ENCODE measurements at regions of chr17 and their contacts with region 1.

Region 1: DNA sequence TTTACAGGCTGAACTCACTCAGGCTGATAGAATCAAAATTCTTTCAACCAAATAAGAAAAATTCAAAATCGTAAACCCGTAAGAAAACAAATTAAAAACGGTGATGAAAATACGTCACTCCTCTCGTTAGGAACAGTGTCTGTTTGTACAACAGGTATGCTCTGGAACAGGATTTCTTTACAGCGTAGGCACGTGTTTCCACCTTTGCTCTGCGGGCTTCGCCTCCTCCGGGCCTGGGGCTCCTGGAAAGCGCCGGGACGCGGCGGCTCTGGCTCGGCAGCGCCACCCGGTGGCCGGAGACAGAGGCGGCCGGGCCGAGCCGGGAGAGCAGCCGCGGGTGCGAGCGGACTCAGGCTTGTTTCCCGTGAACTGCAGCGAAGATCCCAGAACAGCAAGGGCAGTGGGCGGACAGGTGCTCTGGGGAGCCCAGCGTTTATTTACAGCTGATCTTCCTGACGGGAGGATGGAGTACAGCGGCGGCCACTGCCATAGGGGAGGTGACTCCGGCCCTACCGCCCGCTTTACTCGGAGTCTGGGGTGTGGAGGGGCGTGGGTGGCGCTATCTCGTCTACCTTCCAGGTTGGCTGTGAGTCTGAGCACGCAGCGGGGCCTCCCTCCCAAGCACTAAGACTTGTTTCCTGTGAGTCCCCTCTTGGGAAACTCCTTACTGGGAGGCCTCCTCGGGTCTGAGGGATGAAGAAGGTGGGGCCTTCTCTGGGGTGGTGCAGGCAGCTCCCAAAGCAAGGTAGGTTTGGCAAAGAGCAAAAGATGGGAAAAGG is 40.5 kb upstream of the ATP2A3 start:
- DNase-seq: peak; percentile 6
- ATAC-seq: peak; percentile 93
- H3K4me3 ChIP-seq: no peak overlapping the region
- H3K27ac ChIP-seq: no peak overlapping the region
- H3K4me1 ChIP-seq: peaks cover 0 to 11% of the 10 kb centered on the region in 2 experiments; a peak in 2 of 4 replicates
- H3K27me3 ChIP-seq: no peaks in the 10 kb centered on the region
- CTCF ChIP-seq: peak; percentile 89 to 94 (median 93)
- POLR2A ChIP-seq: no peak
- RAD21 ChIP-seq: peak; percentile 93

Region 2: GRCh38 chr17:3859940-3860339 is 144.8 kb before region 1 on chr17:
- CTCF ChIA-PET with region 1: no interaction called
- POLR2A ChIA-PET with region 1: no interaction called
- RAD21 ChIA-PET with region 1: no interaction called
- intact Hi-C with region 1: loop called (anchors 2 kb)
- DNase-seq: no peak
- ATAC-seq: no peak
- H3K4me3 ChIP-seq: no peak overlapping the region
- H3K27ac ChIP-seq: no peak overlapping the region
- H3K4me1 ChIP-seq: no peaks in the 10 kb centered on the region
- H3K27me3 ChIP-seq: no peaks in the 10 kb centered on the region
- CTCF ChIP-seq: no peak
- POLR2A ChIP-seq: no peak
- RAD21 ChIP-seq: no peak

Region 3: DNA sequence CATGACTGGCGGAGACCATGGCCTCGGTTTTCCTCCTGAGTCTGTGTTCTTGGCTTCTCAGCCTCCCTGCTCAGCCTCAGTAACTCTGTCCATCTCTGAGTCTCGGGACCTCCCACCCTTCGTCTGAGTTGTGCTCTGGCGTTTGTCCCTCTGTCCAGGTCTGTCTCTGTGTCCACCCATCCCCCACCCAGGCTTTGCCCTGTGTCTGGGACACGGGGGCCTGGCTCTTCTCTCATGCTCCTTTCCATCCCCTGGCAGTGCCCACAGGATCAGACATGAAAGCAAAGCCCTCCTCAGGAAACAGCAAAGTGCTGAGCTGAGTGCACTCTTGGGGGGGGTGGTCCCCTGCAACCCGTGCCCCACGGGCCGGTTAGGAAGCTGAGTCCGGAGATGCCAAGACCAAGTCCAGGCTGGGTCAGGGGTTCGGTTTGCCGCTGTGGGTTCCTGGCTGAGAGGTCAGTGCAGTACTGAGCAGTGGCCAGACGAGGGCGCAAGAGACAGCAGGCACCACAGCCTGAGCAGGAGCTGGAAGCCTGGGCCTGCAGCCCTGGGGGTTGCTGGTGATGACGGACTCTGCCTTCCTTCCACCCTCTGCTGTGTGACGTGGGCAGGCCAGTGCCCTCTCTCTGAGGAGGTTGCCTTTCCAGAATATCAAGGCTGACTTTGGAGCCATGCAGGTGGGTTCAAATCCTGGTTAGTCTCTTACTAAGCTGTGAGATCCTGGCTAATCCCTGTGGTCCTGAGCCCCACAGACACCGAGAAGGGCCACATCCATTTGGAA is 91.0 kb before region 1 on chr17:
- CTCF ChIA-PET with region 1: interaction called, 12 read pairs
- POLR2A ChIA-PET with region 1: no interaction called
- RAD21 ChIA-PET with region 1: no interaction called
- intact Hi-C with region 1: loop called (anchors 2 kb)
- DNase-seq: peak; percentile 54
- ATAC-seq: peak; percentile 95
- H3K4me3 ChIP-seq: no peak overlapping the region
- H3K27ac ChIP-seq: no peak overlapping the region
- H3K4me1 ChIP-seq: peaks cover 0 to 8% of the 10 kb centered on the region in 2 experiments; a peak in 2 of 4 replicates
- H3K27me3 ChIP-seq: no peaks in the 10 kb centered on the region
- CTCF ChIP-seq: peak; percentile 78 to 98 (median 96)
- POLR2A ChIP-seq: no peak
- RAD21 ChIP-seq: peak; percentile 91

Region 4: GRCh38 chr17:3935140-3935542 is 69.6 kb before region 1 on chr17:
- CTCF ChIA-PET with region 1: interaction called, 4 read pairs
- POLR2A ChIA-PET with region 1: no interaction called
- RAD21 ChIA-PET with region 1: no interaction called
- intact Hi-C with region 1: loop called (anchors 1 kb)
- DNase-seq: peak; percentile 41
- ATAC-seq: peak; percentile 99
- H3K4me3 ChIP-seq: no peak overlapping the region
- H3K27ac ChIP-seq: no peak overlapping the region
- H3K4me1 ChIP-seq: peaks cover 0 to 5% of the 10 kb centered on the region in 2 experiments; a peak in 1 of 4 replicates
- H3K27me3 ChIP-seq: no peaks in the 10 kb centered on the region
- CTCF ChIP-seq: peak; percentile 73 to 81 (median 77)
- POLR2A ChIP-seq: no peak
- RAD21 ChIP-seq: peak; percentile 87

Region 5: GRCh38 chr17:3989041-3989886 is 15.4 kb before region 1 on chr17:
- CTCF ChIA-PET with region 1: no interaction called
- POLR2A ChIA-PET with region 1: no interaction called
- RAD21 ChIA-PET with region 1: no interaction called
- intact Hi-C with region 1: no loop called
- DNase-seq: no peak
- ATAC-seq: no peak
- H3K4me3 ChIP-seq: no peak overlapping the region
- H3K27ac ChIP-seq: no peak overlapping the region
- H3K4me1 ChIP-seq: peaks cover 0 to 5% of the 10 kb centered on the region in 2 experiments; a peak in 2 of 4 replicates
- H3K27me3 ChIP-seq: no peaks in the 10 kb centered on the region
- CTCF ChIP-seq: no peak
- POLR2A ChIP-seq: no peak
- RAD21 ChIP-seq: no peak